ENCODE measurements at regions of chr16 and their contacts with region 1.

Region 1: DNA sequence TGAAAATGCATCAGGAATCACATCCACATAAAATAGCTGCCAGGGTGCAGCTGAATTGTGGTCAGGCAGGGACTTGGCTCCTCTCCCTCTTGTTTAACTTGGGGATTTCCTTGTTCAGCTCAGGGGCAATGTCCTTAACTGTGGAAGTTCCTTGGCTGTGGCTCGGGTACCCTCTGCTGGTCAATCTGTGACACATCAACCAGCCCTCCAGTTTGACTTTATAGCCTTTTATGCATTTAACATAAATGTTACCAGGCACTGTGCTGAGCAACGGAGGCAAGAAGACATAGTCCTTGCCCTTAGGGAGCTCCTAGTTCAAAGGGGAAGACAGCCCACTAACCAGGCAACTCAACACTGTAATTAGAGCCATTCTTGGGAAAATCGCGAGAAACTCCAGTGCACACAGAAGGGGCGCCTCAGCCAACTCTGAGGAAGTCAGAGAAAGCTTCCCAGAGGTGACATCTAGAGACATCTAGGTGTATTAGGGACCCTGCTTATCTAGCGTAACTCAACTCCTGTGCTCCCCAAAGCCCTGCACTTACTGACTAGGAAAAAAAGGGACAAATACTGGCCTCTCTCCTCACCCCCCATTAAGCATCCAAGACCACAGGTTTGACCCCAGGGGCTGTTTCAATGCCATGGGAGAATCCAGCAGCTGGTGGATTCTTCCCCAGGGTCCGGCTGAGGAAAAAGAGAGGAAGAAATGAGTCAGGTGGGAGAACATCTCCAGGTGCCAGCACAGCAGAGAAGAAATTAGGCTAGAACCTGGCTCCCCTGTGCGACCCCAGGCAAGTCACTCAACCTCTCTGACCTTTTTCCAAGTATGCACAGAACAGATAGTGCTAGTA is 17.3 kb upstream of the EEF2K start:
- DNase-seq: peak; percentile 59 to 69 (median 63)
- H3K4me3 ChIP-seq: no peak overlapping the region
- H3K27ac ChIP-seq: peak overlapping the region; percentile 43 to 94
- H3K4me1 ChIP-seq: peaks cover 5% of the 10 kb centered on the region
- H3K27me3 ChIP-seq: no peaks in the 10 kb centered on the region
- CTCF ChIP-seq: peak; percentile 46 to 83 (median 77)
- EP300 ChIP-seq: no peak
- POLR2A ChIP-seq: no peak

Region 2: DNA sequence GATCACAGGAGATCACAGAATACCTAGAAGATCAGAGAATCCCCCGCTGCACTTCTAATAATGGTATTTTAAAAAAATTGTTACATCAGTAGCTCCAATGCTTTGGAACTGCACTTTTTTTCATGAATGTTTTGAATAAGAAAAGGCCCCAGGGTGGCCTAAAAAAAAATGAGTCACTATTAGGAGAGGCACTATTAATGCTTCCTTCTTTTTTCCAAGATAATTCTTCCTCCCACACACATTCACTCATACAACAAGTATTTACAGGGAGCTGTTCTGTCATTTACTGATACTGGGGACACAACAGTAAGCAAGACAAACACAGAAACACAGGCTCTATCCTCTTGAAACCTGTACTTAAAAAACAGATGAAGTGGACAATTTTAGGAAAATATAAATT is 187.2 kb before region 1 on chr16:
- intact Hi-C with region 1: loop called (anchors 2 to 5 kb)
- DNase-seq: no peak
- H3K4me3 ChIP-seq: no peak overlapping the region
- H3K27ac ChIP-seq: no peak overlapping the region
- H3K4me1 ChIP-seq: peaks cover 1% of the 10 kb centered on the region
- H3K27me3 ChIP-seq: no peaks in the 10 kb centered on the region
- CTCF ChIP-seq: no peak
- EP300 ChIP-seq: no peak
- POLR2A ChIP-seq: no peak

Region 3: DNA sequence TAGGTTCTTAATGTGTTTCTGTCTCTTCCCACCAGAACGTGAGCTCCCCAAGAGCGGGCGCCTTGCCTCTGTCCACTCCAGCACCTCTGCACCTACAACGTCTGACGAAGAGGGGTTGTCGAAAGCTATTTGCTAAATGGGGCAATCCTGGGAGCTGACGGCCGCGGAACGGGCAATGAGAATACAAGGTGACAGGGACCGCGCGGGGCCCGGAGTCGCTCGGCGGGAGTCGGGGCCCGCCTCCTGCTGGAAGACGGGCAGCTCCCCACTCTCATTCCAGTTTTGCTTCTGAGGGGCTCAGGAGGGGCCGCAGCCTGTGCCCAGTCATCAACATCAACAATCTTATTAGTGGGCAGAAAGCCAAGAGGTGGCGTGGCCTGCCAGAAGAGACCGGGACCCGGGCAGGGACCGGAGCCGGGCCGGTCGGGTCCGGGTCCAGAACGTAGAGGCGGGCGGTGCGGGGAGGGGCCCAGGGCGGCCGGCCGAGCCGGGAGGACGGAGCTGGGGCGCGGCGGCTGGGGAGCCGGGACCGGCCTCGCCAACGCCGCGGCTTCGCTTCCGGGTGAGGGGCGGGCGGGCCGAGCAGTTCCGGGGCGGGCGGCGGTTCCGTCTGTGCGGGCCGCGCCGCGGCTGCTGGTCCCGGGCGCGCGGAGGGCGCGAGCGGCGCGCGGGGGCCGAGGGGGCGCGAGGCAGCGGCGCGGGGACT is 181.2 kb before region 1 on chr16 and contains the start of gene MOSMO:
- intact Hi-C with region 1: loop called in 3 of 4 experiments (anchors 5 kb)
- DNase-seq: peak; percentile 66 to 85 (median 76)
- H3K4me3 ChIP-seq: peak within 1 kb of the TSS; percentile 57
- H3K27ac ChIP-seq: peak within 1 kb of the TSS in 1 of 2 donors; percentile 57
- H3K4me1 ChIP-seq: peaks cover 7% of the 10 kb centered on the region
- H3K27me3 ChIP-seq: no peaks in the 10 kb centered on the region
- CTCF ChIP-seq: peak in 2 of 3 donors; percentile 15 to 31
- EP300 ChIP-seq: no peak
- POLR2A ChIP-seq: peak; percentile 33
- total RNA-seq, gene MOSMO: 14.3 to 33.3 (median 20.7) TPM

Region 4: GRCh38 chr16:22035153-22035552 is 153.7 kb before region 1 on chr16:
- intact Hi-C with region 1: no loop called
- DNase-seq: no peak
- H3K4me3 ChIP-seq: no peak overlapping the region
- H3K27ac ChIP-seq: no peak overlapping the region
- H3K4me1 ChIP-seq: no peaks in the 10 kb centered on the region
- H3K27me3 ChIP-seq: no peaks in the 10 kb centered on the region
- CTCF ChIP-seq: no peak
- EP300 ChIP-seq: no peak
- POLR2A ChIP-seq: no peak

Region 5: DNA sequence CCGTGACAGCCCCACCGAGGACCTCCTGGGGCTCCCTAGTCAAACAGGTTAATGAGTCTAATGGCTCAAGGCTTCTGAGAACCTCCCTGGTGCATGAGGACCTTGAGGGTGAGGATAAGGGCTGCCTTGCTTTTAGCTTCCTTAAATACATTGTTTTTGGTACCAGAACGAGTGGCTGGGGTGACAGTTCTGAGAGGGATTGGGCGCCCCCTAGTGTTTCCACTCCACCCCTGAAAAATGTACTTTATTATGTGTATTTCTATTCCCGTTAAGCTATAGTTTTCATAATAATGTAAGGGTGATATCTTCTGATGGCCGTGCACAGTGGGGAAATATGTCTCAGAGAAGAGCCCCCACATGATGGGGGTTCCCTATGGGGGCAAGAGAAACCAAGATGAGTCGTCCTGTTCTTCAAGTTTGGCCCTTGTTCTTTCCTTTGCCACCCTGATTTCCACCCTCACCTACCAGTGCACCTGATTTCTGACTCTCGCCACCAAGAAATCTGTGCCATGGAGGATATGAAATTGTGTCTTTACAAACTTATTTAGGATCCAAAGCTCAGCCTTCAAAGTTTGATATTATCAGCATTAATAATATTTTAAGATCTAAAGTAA is 111.0 kb before region 1 on chr16:
- intact Hi-C with region 1: loop called in 1 of 4 experiments (anchors 10 kb)
- DNase-seq: peak; percentile 28 to 72 (median 65)
- H3K4me3 ChIP-seq: no peak overlapping the region
- H3K27ac ChIP-seq: no peak overlapping the region
- H3K4me1 ChIP-seq: peaks cover 3% of the 10 kb centered on the region
- H3K27me3 ChIP-seq: no peaks in the 10 kb centered on the region
- CTCF ChIP-seq: peak; percentile 54 to 61 (median 56)
- EP300 ChIP-seq: no peak
- POLR2A ChIP-seq: no peak

Region 6: DNA sequence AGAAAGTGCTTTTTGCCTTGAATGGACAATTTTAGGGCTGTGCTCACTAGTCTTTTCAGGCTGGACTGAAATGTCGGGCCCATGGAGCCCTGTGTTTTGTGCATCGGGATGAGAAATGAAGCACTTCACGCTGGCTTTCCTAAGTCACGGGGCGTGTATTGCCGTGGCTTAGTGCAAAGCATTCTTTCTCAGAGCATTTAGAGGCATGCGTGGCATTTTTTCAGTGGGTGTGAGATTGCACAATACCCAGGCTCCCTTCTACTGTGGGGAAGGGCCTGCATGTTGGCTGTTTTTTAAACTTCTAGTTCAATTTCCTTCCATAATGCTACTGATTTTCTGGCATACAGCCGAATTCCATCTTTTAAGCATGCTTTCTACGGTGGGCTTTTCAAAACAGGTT is 95.8 kb after region 1 on chr16:
- intact Hi-C with region 1: no loop called
- DNase-seq: no peak
- H3K4me3 ChIP-seq: no peak overlapping the region
- H3K27ac ChIP-seq: no peak overlapping the region
- H3K4me1 ChIP-seq: no peaks in the 10 kb centered on the region
- H3K27me3 ChIP-seq: no peaks in the 10 kb centered on the region
- CTCF ChIP-seq: no peak
- EP300 ChIP-seq: no peak
- POLR2A ChIP-seq: no peak

Measured in ovary (tissue), 10 donors.